ENCODE measurements at regions of chr1 and their contacts with region 1.

Region 1: DNA sequence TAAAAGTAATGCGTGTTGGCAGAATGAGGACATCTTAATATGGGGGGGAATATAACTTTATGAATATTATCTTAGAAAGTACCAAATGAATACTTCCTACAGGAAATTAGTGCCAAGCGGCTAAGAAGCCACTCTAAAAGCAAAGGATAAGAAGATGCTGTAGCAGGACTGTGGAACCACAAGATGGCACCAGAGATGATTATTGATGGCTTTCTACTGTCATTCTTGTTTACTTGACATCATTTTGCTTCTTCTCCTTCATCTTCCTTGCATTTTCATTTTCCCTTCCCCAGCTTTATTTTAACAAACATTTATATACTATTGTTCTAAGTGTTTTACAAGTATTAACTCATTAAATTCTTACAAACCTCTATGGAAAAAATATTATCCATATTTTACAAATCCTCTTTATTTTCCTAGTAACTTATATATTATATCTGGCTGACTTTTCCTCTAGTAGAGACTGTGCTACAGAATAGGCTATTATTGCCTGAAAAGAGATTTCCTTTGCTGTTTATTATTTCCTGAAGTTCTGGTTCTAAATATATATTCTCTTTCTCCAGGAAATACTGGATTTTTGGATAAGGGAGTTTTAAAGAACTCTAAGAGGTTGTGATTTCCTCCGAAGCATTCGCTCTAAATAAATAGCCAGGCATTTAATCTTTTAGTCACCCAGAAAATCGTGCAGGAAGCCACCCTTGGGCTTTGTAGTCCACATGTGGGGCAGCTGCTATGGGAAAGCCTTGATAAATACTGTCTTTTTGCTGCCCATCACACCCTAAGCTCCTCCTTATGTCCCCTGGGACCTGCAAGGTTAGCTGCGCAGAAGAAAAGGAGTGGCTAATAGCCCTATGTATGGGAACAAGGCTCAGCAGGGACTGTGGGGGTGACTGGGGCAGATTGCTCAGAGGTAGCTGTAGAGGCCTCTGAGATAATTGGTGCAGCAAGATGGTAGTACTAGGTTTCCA is 69.8 kb downstream of the TPR start:
- DNase-seq: no peak
- H3K4me3 ChIP-seq: no peak overlapping the region
- H3K27ac ChIP-seq: no peak overlapping the region
- H3K4me1 ChIP-seq: no peaks in the 10 kb centered on the region
- H3K27me3 ChIP-seq: no peaks in the 10 kb centered on the region
- CTCF ChIP-seq: peak in 2 of 3 experiments; percentile 42 to 75; a peak in 2 of 4 replicates
- EP300 ChIP-seq: no peak
- POLR2A ChIP-seq: no peak
- RAD21 ChIP-seq: peak; percentile 40 to 47

Region 2: GRCh38 chr1:186283374-186283773 is 21.9 kb before region 1 on chr1:
- CTCF ChIA-PET with region 1: interaction called, 15 read pairs
- POLR2A ChIA-PET with region 1: no interaction called
- DNase-seq: no peak
- H3K4me3 ChIP-seq: no peak overlapping the region
- H3K27ac ChIP-seq: no peak overlapping the region
- H3K4me1 ChIP-seq: no peaks in the 10 kb centered on the region
- H3K27me3 ChIP-seq: no peaks in the 10 kb centered on the region
- CTCF ChIP-seq: no peak
- EP300 ChIP-seq: no peak
- POLR2A ChIP-seq: no peak
- RAD21 ChIP-seq: no peak

Region 3: DNA sequence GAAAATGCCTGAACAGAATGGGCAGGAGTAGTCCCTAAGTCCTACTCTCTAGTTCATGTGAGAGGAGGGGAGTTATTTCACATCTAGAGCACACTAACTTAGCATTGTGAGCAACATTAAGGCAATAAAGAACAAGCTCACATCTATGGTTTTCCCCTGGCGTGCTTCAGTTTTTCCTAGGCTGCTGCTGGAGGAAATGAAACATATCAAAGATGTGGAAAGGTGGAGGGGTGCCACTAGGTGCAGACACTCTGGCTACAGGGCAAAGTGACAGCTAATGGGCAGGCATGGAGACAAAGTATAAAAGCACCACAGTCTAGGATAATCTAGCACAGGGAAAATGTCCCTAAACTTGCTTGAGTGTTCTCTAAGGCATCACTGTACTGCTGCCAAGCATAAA is 12.4 kb before region 1 on chr1:
- CTCF ChIA-PET with region 1: interaction called, 14 read pairs
- POLR2A ChIA-PET with region 1: no interaction called
- DNase-seq: no peak
- H3K4me3 ChIP-seq: no peak overlapping the region
- H3K27ac ChIP-seq: no peak overlapping the region
- H3K4me1 ChIP-seq: no peaks in the 10 kb centered on the region
- H3K27me3 ChIP-seq: no peaks in the 10 kb centered on the region
- CTCF ChIP-seq: no peak
- EP300 ChIP-seq: no peak
- POLR2A ChIP-seq: no peak
- RAD21 ChIP-seq: no peak